CD8-positive, alpha-beta T cell (primary cell): ENCODE measurements at regions of chr2 and their contacts with region 1.

Region 1: GRCh38 chr2:160994141-160995002 is 165.9 kb upstream of the TANK start:
- DNase-seq: peak; percentile 39 to 85 (median 71)
- ATAC-seq: peak; percentile 96
- H3K4me3 ChIP-seq: no peak overlapping the region
- H3K4me3 Mint-ChIP-seq: peak overlapping the region; percentile 40
- H3K27ac ChIP-seq: no peak overlapping the region
- H3K27ac Mint-ChIP-seq: peak overlapping the region; percentile 15
- H3K4me1 ChIP-seq: no peaks in the 10 kb centered on the region
- H3K4me1 Mint-ChIP-seq: peaks cover 10% of the 10 kb centered on the region
- H3K27me3 ChIP-seq: no peaks in the 10 kb centered on the region
- H3K27me3 Mint-ChIP-seq: no peaks in the 10 kb centered on the region
- CTCF ChIP-seq: peak; percentile 86

Region 2: DNA sequence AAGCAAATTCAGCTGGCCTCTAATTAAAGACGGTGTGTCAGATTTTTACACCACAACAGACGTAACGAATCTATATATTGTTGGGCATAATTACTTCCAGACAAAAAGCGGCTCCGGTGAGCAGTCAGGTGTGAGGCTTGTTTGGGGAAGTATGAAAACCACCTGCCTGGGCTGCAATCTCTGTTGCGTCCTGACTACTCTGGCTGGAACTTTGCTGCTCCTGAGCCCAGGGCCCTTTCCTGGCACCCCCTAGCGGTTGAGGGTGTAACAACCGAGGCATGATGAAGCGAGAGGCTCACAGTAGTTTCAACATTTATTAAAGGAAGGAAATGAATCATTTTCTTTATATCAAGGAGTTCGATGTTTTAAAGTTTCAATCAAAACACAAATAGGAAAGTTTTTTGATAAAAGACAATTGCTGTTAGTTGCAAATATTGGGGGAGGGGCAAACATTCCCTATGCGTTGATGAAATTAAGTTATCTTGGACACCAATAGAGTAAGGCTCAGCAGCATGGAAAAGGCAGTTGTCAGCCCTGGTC is 783.7 kb before region 1 on chr2:
- CTCF ChIA-PET with region 1: interaction called, 4 read pairs
- POLR2A ChIA-PET with region 1: no interaction called
- intact Hi-C with region 1: loop called in 1 of 2 experiments (anchors 1 kb)
- DNase-seq: peak; percentile 39 to 79 (median 67)
- ATAC-seq: peak; percentile 91
- H3K4me3 ChIP-seq: no peak overlapping the region
- H3K4me3 Mint-ChIP-seq: no peak overlapping the region
- H3K27ac ChIP-seq: no peak overlapping the region
- H3K27ac Mint-ChIP-seq: no peak overlapping the region
- H3K4me1 ChIP-seq: no peaks in the 10 kb centered on the region
- H3K4me1 Mint-ChIP-seq: peaks cover 7% of the 10 kb centered on the region
- H3K27me3 ChIP-seq: no peaks in the 10 kb centered on the region
- H3K27me3 Mint-ChIP-seq: peaks cover 9% of the 10 kb centered on the region
- CTCF ChIP-seq: peak; percentile 85

Region 3: DNA sequence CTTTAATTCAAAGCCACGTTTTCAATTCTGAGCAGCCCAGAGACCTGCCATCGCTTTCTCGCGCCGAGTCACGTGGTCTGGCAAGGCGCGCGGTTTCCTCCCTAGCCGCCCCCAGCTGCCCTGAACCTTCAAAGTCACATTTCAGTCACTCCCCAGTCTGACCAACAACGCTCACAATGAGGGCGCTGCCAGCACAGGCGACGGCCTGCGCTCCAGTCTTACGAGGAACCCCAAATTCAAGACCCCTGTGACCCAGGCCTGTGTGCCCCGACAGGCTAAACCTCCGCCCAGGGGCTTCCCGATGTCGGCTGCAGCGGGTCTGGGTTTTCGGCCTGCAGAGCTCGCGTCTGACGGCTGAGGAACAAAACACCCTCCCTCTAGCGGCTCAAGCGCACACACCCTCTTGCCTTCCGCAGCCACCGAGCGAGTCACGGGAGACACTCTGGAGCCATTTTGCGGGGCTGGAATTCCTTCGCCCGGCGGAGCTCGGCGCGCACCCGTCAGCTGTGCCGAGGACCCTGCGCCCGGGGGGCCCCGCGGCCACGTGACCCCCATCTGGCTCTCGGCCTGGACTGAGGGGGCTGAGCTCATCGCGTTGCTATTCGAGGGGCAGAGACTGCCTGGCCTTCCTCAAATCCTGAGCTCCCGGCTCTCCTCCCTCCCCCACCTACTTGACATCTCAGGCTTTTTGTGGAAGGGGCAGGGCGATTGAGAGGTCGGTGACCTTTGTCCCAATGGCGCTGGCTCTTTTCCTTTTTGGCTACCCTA is 724.4 kb before region 1 on chr2:
- CTCF ChIA-PET with region 1: interaction called, 20 read pairs
- POLR2A ChIA-PET with region 1: no interaction called
- intact Hi-C with region 1: no loop called
- DNase-seq: peak; percentile 37 to 85 (median 67)
- ATAC-seq: peak; percentile 88
- H3K4me3 ChIP-seq: peak overlapping the region; percentile 57 to 75
- H3K4me3 Mint-ChIP-seq: peak overlapping the region; percentile 87
- H3K27ac ChIP-seq: peak overlapping the region; percentile 48 to 65
- H3K27ac Mint-ChIP-seq: peak overlapping the region; percentile 94
- H3K4me1 ChIP-seq: peaks cover 17% of the 10 kb centered on the region
- H3K4me1 Mint-ChIP-seq: peaks cover 28% of the 10 kb centered on the region
- H3K27me3 ChIP-seq: no peaks in the 10 kb centered on the region
- H3K27me3 Mint-ChIP-seq: no peaks in the 10 kb centered on the region
- CTCF ChIP-seq: peak; percentile 70

Region 4: DNA sequence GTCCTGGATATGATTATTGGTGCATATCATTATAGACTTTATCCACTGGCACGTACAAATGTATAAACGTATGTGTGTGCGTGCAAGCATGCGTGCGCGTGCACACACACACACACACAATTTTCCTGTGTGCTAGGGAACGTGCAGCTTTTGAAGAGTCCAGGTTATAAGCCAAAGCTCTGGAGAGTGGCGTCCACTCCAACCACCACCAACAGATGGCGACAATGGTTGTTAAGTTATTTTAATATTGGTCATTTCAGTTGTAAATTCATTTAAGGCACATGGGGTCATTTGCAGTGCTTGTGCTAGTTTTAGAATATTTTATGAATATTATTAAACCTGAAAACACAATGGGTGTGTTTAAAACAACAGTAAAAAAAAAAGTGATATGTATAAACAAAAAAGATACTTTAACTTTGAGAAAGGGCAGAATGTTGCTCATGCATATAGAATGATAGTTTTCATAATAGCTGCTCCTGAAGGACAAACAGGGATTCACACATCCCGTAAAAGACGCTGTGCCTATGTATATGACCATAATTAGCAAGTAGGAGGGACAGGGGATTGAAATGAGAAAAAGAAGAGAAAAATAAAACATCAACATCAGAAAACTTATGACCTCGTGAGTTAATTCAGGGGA is 670.1 kb before region 1 on chr2:
- CTCF ChIA-PET with region 1: interaction called, 26 read pairs
- POLR2A ChIA-PET with region 1: no interaction called
- intact Hi-C with region 1: loop called (anchors 1 to 2 kb)
- DNase-seq: peak; percentile 14 to 61 (median 45)
- ATAC-seq: no peak
- H3K4me3 ChIP-seq: no peak overlapping the region
- H3K4me3 Mint-ChIP-seq: no peak overlapping the region
- H3K27ac ChIP-seq: no peak overlapping the region
- H3K27ac Mint-ChIP-seq: no peak overlapping the region
- H3K4me1 ChIP-seq: peaks cover 53% of the 10 kb centered on the region
- H3K4me1 Mint-ChIP-seq: peaks cover 86% of the 10 kb centered on the region
- H3K27me3 ChIP-seq: no peaks in the 10 kb centered on the region
- H3K27me3 Mint-ChIP-seq: no peaks in the 10 kb centered on the region
- CTCF ChIP-seq: peak; percentile 54

Region 5: GRCh38 chr2:160353166-160353565 is 641.2 kb before region 1 on chr2:
- CTCF ChIA-PET with region 1: interaction called, 28 read pairs
- POLR2A ChIA-PET with region 1: no interaction called
- intact Hi-C with region 1: loop called (anchors 1 kb)
- DNase-seq: peak in 4 of 9 experiments; percentile 35 to 65 (median 46)
- ATAC-seq: peak; percentile 79
- H3K4me3 ChIP-seq: no peak overlapping the region
- H3K4me3 Mint-ChIP-seq: no peak overlapping the region
- H3K27ac ChIP-seq: no peak overlapping the region
- H3K27ac Mint-ChIP-seq: peak overlapping the region; percentile 60
- H3K4me1 ChIP-seq: peaks cover 18% of the 10 kb centered on the region
- H3K4me1 Mint-ChIP-seq: peaks cover 77% of the 10 kb centered on the region
- H3K27me3 ChIP-seq: no peaks in the 10 kb centered on the region
- H3K27me3 Mint-ChIP-seq: no peaks in the 10 kb centered on the region
- CTCF ChIP-seq: peak; percentile 64

Region 6: GRCh38 chr2:160918906-160919503 is 75.4 kb before region 1 on chr2:
- CTCF ChIA-PET with region 1: no interaction called
- POLR2A ChIA-PET with region 1: no interaction called
- intact Hi-C with region 1: loop called in 1 of 2 experiments (anchors 2 kb)
- DNase-seq: peak in 6 of 9 experiments; percentile 10 to 56 (median 36)
- ATAC-seq: no peak
- H3K4me3 ChIP-seq: no peak overlapping the region
- H3K4me3 Mint-ChIP-seq: no peak overlapping the region
- H3K27ac ChIP-seq: no peak overlapping the region
- H3K27ac Mint-ChIP-seq: no peak overlapping the region
- H3K4me1 ChIP-seq: no peaks in the 10 kb centered on the region
- H3K4me1 Mint-ChIP-seq: no peaks in the 10 kb centered on the region
- H3K27me3 ChIP-seq: no peaks in the 10 kb centered on the region
- H3K27me3 Mint-ChIP-seq: no peaks in the 10 kb centered on the region
- CTCF ChIP-seq: peak; percentile 14

Region 7: GRCh38 chr2:161076936-161077335 is 82.6 kb after region 1 on chr2:
- CTCF ChIA-PET with region 1: no interaction called
- POLR2A ChIA-PET with region 1: no interaction called
- intact Hi-C with region 1: no loop called
- DNase-seq: no peak
- ATAC-seq: no peak
- H3K4me3 ChIP-seq: no peak overlapping the region
- H3K4me3 Mint-ChIP-seq: no peak overlapping the region
- H3K27ac ChIP-seq: no peak overlapping the region
- H3K27ac Mint-ChIP-seq: peak overlapping the region; percentile 82
- H3K4me1 ChIP-seq: peaks cover 23% of the 10 kb centered on the region
- H3K4me1 Mint-ChIP-seq: peaks cover 28% of the 10 kb centered on the region
- H3K27me3 ChIP-seq: no peaks in the 10 kb centered on the region
- H3K27me3 Mint-ChIP-seq: no peaks in the 10 kb centered on the region
- CTCF ChIP-seq: no peak